Naive thymus-derived CD4-positive, alpha-beta T cell (primary cell): ENCODE measurements at regions of chr21 and their contacts with region 1.

Region 1: DNA sequence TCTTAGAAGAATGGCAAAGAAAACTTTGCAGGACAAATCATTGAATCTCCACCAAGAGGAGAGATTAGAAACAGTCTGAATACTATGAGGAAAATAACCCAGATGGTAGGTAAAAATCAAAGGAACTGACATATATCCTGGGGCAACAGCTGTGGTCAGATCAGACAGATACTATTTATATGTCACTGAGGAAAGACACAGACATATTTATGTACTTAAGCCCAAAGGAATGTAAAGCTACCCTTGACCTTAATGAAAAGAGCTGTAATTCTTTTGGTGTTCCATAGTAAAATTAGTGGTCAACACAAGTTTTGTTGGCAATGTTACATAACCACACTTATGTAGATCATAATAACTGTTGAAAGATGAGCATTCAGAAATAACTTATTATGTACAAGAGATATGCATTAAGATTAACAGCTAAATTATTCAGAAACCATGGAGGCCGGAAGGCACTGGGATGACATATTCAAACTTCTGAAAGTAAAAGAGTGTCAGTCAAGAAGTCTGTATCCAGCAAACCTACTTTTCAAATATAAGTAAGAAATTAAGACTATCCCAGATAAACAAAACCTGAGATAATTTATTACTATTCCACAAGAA is 166.1 kb upstream of the SAMSN1 start:
- DNase-seq: no peak
- ATAC-seq: no peak
- H3K4me3 ChIP-seq: no peak overlapping the region
- H3K4me3 Mint-ChIP-seq: no peak overlapping the region
- H3K27ac ChIP-seq: no peak overlapping the region
- H3K27ac Mint-ChIP-seq: no peak overlapping the region
- H3K4me1 ChIP-seq: no peaks in the 10 kb centered on the region
- H3K4me1 Mint-ChIP-seq: peaks cover 0 to 11% (median 0%) of the 10 kb centered on the region in 7 donors
- H3K27me3 ChIP-seq: no peaks in the 10 kb centered on the region
- H3K27me3 Mint-ChIP-seq: no peaks in the 10 kb centered on the region

Region 2: GRCh38 chr21:14690886-14691285 is 21.3 kb before region 1 on chr21:
- CTCF ChIA-PET with region 1: no interaction called
- POLR2A ChIA-PET with region 1: no interaction called
- intact Hi-C with region 1: no loop called
- DNase-seq: no peak
- ATAC-seq: peak; percentile 65
- H3K4me3 ChIP-seq: no peak overlapping the region
- H3K4me3 Mint-ChIP-seq: no peak overlapping the region
- H3K27ac ChIP-seq: no peak overlapping the region
- H3K27ac Mint-ChIP-seq: no peak overlapping the region
- H3K4me1 ChIP-seq: peaks cover 0 to 6% of the 10 kb centered on the region in 2 donors
- H3K4me1 Mint-ChIP-seq: peaks cover 8 to 31% (median 14%) of the 10 kb centered on the region in 7 donors
- H3K27me3 ChIP-seq: no peaks in the 10 kb centered on the region
- H3K27me3 Mint-ChIP-seq: peaks cover 0 to 4% (median 0%) of the 10 kb centered on the region in 5 donors

Region 3: GRCh38 chr21:14762734-14763694 is 50.8 kb after region 1 on chr21:
- CTCF ChIA-PET with region 1: no interaction called
- POLR2A ChIA-PET with region 1: no interaction called
- intact Hi-C with region 1: loop called in 1 of 2 experiments (anchors 5 kb)
- DNase-seq: peak in 3 of 9 donors; percentile 11 to 20 (median 15)
- ATAC-seq: peak; percentile 84
- H3K4me3 ChIP-seq: peak overlapping the region; percentile 21
- H3K4me3 Mint-ChIP-seq: no peak overlapping the region
- H3K27ac ChIP-seq: peak overlapping the region; percentile 26
- H3K27ac Mint-ChIP-seq: no peak overlapping the region
- H3K4me1 ChIP-seq: peaks cover 0 to 10% of the 10 kb centered on the region in 2 donors
- H3K4me1 Mint-ChIP-seq: peaks cover 0 to 8% (median 6%) of the 10 kb centered on the region in 7 donors
- H3K27me3 ChIP-seq: no peaks in the 10 kb centered on the region
- H3K27me3 Mint-ChIP-seq: no peaks in the 10 kb centered on the region

Region 4: GRCh38 chr21:14889080-14889810 is 177.0 kb after region 1 on chr21:
- CTCF ChIA-PET with region 1: no interaction called
- POLR2A ChIA-PET with region 1: no interaction called
- intact Hi-C with region 1: no loop called
- DNase-seq: no peak
- ATAC-seq: no peak
- H3K4me3 ChIP-seq: no peak overlapping the region
- H3K4me3 Mint-ChIP-seq: no peak overlapping the region
- H3K27ac ChIP-seq: no peak overlapping the region
- H3K27ac Mint-ChIP-seq: no peak overlapping the region
- H3K4me1 ChIP-seq: no peaks in the 10 kb centered on the region
- H3K4me1 Mint-ChIP-seq: peaks cover 0 to 8% (median 0%) of the 10 kb centered on the region in 7 donors
- H3K27me3 ChIP-seq: no peaks in the 10 kb centered on the region
- H3K27me3 Mint-ChIP-seq: peaks cover 0 to 10% (median 0%) of the 10 kb centered on the region in 5 donors